PC-9 (cell line): ENCODE measurements at regions of chr14 and their contacts with region 1.

Region 1: GRCh38 chr14:20682435-20683124 is 1.8 kb upstream of the RNASE4 start:
- DNase-seq: peak; percentile 64 to 71
- H3K4me3 ChIP-seq: peak overlapping the region; percentile 75
- H3K27ac ChIP-seq: peak overlapping the region; percentile 82
- H3K4me1 ChIP-seq: peaks cover 21% of the 10 kb centered on the region
- H3K27me3 ChIP-seq: no peaks in the 10 kb centered on the region
- CTCF ChIP-seq: no peak

Region 2: DNA sequence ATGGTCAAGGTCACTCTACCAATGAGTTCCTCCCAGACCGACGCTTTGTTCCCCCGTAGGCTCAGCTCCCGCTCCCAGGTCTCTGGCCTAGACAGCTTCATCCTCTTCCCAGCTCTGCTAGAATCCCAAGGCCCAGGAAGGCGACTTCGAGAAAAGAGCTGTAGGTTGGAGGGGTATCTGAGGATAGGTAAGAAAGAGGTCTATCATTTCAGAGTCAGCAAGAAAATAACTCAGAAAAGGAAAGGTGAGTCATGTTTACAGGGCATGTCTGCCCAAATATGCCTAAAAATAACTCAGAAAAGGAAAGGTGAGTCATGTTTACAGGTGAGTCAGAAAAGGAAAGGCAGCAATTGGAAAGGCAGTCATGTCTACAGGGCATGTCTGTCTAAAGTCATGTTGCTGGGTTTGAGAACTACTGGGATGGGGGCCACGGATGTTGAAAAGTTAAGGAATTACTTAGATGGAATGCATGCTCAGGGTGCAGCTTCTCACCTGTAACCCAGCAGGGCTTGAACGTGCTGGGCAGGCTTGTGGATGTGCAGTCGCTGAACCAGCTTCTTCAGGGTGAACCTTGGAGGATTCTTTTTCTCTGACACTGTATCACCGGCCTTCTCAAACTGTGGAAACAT is 281.5 kb before region 1 on chr14:
- CTCF ChIA-PET with region 1: interaction called, 12 read pairs
- POLR2A ChIA-PET with region 1: no interaction called
- intact Hi-C with region 1: no loop called
- DNase-seq: peak; percentile 55 to 91
- H3K4me3 ChIP-seq: peak overlapping the region; percentile 26; the same call in 1 of the 2 replicates
- H3K27ac ChIP-seq: peak overlapping the region; percentile 85
- H3K4me1 ChIP-seq: peaks cover 26% of the 10 kb centered on the region
- H3K27me3 ChIP-seq: no peaks in the 10 kb centered on the region
- CTCF ChIP-seq: no peak

Region 3: DNA sequence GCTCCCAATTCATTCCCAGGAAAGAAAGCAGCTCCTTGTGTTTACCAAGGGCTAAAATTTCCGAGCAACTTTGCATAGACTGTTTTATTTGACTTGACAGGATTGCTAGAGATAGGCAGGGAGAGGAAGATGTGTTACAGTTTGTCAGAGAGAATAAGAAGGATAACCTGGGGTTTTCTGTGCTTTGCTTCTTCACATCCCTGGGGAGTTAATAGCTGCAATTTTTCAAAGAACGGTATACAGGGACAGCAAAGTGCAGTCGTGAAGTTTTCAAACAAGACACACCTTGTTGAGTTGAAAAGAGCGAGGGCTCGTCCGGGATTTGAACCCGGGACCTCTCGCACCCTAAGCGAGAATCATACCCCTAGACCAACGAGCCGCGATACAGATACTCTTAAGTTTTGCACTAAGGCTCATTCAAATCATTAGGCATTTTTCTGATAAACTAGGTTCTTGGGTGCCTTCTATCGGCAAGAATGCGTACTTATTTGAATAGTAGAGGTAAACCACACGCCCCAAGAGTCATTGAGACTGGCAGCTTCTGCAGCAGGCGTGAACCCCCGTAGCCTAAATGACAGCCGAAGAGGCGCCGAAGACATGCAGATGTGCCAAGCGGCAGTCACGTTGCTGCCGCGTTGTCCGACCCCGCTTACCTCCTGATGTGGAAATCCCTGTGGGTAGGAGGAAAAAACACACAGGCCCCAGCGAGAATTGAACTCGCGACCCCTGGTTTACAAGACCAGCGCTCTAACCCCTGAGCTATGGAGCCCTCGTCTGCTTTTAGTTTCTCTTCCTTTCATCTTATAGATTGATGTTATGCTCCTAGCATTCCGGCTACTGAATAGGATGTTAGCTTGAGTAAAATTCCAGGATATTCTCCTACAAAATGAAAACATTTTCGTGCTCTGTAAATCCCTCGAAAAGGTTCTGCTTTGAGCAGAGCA is 69.2 kb before region 1 on chr14:
- CTCF ChIA-PET with region 1: no interaction called
- POLR2A ChIA-PET with region 1: interaction called, 3 read pairs
- intact Hi-C with region 1: loop called (anchors 1 kb)
- DNase-seq: peak; percentile 79 to 94
- H3K4me3 ChIP-seq: peak overlapping the region; percentile 63
- H3K27ac ChIP-seq: peak overlapping the region; percentile 51
- H3K4me1 ChIP-seq: peaks cover 24% of the 10 kb centered on the region
- H3K27me3 ChIP-seq: no peaks in the 10 kb centered on the region
- CTCF ChIP-seq: peak; percentile 85

Region 4: DNA sequence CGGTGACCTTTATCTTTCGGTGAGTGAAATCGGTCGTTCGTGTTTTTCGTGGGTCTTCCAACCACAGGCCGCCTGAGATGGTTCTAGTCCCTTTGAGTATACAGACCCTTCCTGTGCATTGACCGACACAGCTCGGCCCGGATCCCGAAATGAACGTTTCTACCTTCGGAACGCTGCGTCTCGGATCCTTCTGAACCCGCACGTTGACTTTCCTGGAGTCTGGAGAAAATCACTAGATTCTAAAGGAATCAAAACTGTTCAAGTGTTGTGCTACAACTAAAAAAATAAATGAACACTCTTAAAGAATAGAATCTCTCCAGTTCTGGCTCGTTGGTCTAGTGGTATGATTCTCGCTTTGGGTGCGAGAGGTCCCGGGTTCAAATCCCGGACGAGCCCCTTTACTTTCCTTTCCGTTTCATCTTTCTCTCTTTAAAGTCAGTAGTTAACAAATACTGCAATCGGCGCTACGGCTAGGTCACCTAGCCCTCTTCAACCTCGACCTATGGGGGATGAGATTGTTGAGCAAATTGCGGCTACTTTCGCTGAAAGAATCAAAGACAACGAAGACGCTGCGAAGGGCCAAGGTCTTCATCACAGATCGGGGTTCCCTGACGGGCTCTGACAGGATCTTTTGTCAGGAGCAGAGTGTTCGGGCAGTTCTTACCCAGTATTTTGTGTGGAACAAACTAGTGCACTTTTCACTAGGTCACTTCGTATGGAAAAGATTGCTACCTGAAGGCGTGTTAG is 49.7 kb before region 1 on chr14:
- CTCF ChIA-PET with region 1: no interaction called
- POLR2A ChIA-PET with region 1: no interaction called
- intact Hi-C with region 1: loop called (anchors 2 kb)
- DNase-seq: peak; percentile 63 to 75
- H3K4me3 ChIP-seq: peak overlapping the region; percentile 81; the same call in 1 of the 2 replicates
- H3K27ac ChIP-seq: no peak overlapping the region
- H3K4me1 ChIP-seq: no peaks in the 10 kb centered on the region
- H3K27me3 ChIP-seq: no peaks in the 10 kb centered on the region
- CTCF ChIP-seq: no peak

Region 5: GRCh38 chr14:21103710-21104447 is 421.3 kb after region 1 on chr14:
- CTCF ChIA-PET with region 1: no interaction called
- POLR2A ChIA-PET with region 1: no interaction called
- intact Hi-C with region 1: loop called (anchors 1 kb)
- DNase-seq: peak; percentile 81 to 88
- H3K4me3 ChIP-seq: peak overlapping the region; percentile 70
- H3K27ac ChIP-seq: peak overlapping the region; percentile 89
- H3K4me1 ChIP-seq: peaks cover 54% of the 10 kb centered on the region
- H3K27me3 ChIP-seq: no peaks in the 10 kb centered on the region
- CTCF ChIP-seq: no peak